Astrocyte of the cerebellum (primary cell): ENCODE measurements at regions of chr2 and their contacts with region 1.

Region 1: GRCh38 chr2:96138179-96139145 is at the start of gene ASTL:
- DNase-seq: no peak
- H3K4me3 ChIP-seq: no peak within 1 kb of the TSS
- CTCF ChIP-seq: peak; percentile 65

Region 2: GRCh38 chr2:96072746-96073145 is 65.7 kb before region 1 on chr2:
- in situ Hi-C with region 1: no loop called
- DNase-seq: no peak
- H3K4me3 ChIP-seq: no peak overlapping the region
- CTCF ChIP-seq: no peak

Region 3: GRCh38 chr2:96265840-96266679 is 127.6 kb after region 1 on chr2 and contains the starts of genes CIAO1 and TMEM127:
- in situ Hi-C with region 1: loop called (anchors 10 kb)
- DNase-seq: peak; percentile 94
- H3K4me3 ChIP-seq: peak within 1 kb of the TSS; percentile 91
- CTCF ChIP-seq: peak; percentile 52